Mammary epithelial cell (primary cell): ENCODE measurements at regions of chr21 and their contacts with region 1.

Region 1: GRCh38 chr21:32257962-32258785 is 20.7 kb downstream of the MIS18A start:
- DNase-seq: peak; percentile 68
- H3K4me3 ChIP-seq: no peak overlapping the region
- H3K27ac ChIP-seq: no peak overlapping the region
- H3K4me1 ChIP-seq: peaks cover 3% of the 10 kb centered on the region
- H3K27me3 ChIP-seq: no peaks in the 10 kb centered on the region
- CTCF ChIP-seq: peak; percentile 63 to 78

Region 2: DNA sequence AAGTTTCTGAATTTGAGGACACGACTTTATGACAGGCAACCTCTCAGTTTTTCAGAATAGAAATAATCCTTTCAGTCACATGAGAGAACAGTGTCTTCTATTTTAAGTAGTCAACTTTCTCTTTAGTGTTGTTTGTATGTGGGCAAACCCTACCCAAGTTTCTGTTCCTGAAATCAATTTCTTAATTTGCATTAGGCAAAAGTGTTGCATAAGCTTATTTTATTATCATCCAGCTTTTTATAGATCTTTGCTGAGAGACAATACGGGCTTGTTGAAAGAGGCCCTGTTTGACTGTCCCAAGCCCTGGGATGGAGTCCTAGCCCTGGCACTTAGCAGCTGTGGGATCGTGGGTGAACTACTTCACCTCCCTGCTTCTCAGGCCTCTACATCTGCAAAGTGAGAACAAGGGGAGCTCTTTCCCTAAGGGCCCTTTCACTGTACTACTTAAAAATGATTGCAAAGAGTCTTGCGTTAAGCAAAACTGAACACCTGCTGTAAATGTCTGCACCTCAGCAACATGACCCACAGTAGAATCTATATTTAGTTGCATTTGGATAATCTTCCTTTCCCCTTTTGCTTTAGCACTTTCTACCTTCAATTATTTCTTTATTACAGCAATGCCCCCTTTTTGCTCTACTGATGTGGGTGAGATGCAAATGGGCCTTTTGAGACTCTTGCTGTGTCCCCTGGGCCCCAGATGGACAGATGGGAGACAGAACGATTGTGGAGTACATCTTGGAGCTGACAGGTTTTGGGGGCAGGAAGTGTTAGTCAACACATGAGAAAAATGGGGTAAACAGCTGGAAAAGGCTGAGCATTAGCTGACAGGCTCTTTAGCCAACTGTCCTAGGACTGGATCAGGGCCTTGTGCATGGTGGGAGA is 485.3 kb before region 1 on chr21:
- CTCF ChIA-PET with region 1: no interaction called
- dilution Hi-C with region 1: no loop called
- in situ Hi-C with region 1: loop called in 1 of 2 experiments (anchors 10 kb)
- intact Hi-C with region 1: no loop called
- DNase-seq: no peak
- H3K4me3 ChIP-seq: no peak overlapping the region
- H3K27ac ChIP-seq: no peak overlapping the region
- H3K4me1 ChIP-seq: no peaks in the 10 kb centered on the region
- H3K27me3 ChIP-seq: no peaks in the 10 kb centered on the region
- CTCF ChIP-seq: no peak

Region 3: DNA sequence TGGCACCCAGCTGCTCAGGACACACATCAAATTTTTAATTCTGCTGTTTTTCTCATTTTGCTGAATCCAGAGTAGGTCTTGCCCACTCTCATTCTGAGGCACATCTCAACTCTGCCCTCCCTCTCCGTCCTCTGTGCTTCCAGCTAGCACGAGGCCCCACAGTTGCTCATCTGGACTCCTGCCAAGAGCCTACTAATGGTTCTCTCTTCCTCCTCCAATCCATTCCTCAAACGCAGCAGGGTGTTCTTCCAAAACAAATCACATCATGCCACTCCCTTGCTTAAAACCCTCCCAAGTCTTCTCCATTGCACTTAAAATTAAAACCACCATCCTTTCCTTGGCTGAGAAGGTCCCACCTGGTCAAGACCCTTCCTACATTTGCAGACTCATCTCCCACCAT is 476.4 kb before region 1 on chr21:
- CTCF ChIA-PET with region 1: interaction called, 5 read pairs
- dilution Hi-C with region 1: no loop called
- in situ Hi-C with region 1: loop called in 1 of 2 experiments (anchors 10 kb)
- intact Hi-C with region 1: loop called (anchors 1 kb)
- DNase-seq: no peak
- H3K4me3 ChIP-seq: no peak overlapping the region
- H3K27ac ChIP-seq: no peak overlapping the region
- H3K4me1 ChIP-seq: no peaks in the 10 kb centered on the region
- H3K27me3 ChIP-seq: no peaks in the 10 kb centered on the region
- CTCF ChIP-seq: no peak

Region 4: GRCh38 chr21:31798842-31799704 is 459.1 kb before region 1 on chr21:
- CTCF ChIA-PET with region 1: no interaction called
- dilution Hi-C with region 1: no loop called
- in situ Hi-C with region 1: loop called in 1 of 2 experiments (anchors 10 kb)
- intact Hi-C with region 1: no loop called
- DNase-seq: peak; percentile 48
- H3K4me3 ChIP-seq: no peak overlapping the region
- H3K27ac ChIP-seq: no peak overlapping the region
- H3K4me1 ChIP-seq: peaks cover 4% of the 10 kb centered on the region
- H3K27me3 ChIP-seq: no peaks in the 10 kb centered on the region
- CTCF ChIP-seq: no peak

Region 5: GRCh38 chr21:31866077-31866511 is 392.1 kb before region 1 on chr21:
- CTCF ChIA-PET with region 1: no interaction called
- dilution Hi-C with region 1: no loop called
- in situ Hi-C with region 1: loop called (anchors 10 to 25 kb)
- intact Hi-C with region 1: loop called (anchors 1 kb)
- DNase-seq: peak; percentile 53
- H3K4me3 ChIP-seq: no peak overlapping the region
- H3K27ac ChIP-seq: no peak overlapping the region
- H3K4me1 ChIP-seq: no peaks in the 10 kb centered on the region
- H3K27me3 ChIP-seq: no peaks in the 10 kb centered on the region
- CTCF ChIP-seq: peak; percentile 56 to 75

Region 6: DNA sequence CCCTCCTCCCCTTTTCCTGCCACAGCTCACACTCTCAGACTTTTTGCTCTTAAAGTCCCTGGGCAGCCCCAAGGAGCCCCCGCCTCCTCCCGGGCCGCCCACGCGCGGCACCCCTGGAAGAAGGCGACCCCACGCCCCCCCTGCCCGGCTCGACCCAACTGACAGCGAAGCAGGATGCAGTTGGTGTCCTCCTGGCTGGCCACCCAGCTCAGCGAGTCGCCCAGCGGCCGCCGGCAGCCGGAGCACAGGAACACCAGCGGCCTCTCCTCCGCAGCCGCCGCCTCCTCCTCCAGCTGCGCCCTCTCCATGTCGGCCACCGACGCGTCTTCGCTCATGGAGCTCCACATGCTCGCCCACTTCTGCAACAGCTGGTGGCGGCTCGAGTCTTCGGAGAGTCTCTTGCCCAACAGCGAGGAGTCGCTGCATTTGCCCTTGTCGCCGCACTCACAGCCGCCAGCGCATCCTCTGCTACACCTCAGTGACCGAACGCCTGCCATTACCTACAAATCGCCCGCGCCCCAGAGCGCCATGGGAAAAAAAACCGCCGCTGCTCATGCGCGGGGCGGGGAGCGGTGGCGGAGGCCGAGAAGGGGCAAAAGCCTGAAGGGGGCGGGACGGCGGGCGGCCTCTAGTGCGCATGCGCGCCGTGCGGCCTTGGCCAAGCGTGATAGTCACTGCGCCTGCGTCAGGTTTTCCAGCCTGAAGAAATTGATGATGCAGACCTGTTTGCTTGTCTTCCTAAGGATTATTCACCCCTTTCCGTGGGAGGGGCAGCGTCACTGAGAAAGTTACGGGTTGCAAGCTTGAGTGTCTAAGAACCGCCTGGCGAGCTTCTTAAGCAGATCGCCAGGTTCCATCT is 20.6 kb after region 1 on chr21 and contains the start of gene MIS18A:
- CTCF ChIA-PET with region 1: no interaction called
- dilution Hi-C with region 1: no loop called
- in situ Hi-C with region 1: no loop called
- intact Hi-C with region 1: no loop called
- DNase-seq: peak; percentile 98
- H3K4me3 ChIP-seq: peak within 1 kb of the TSS; percentile 94 to 98 (median 94)
- H3K27ac ChIP-seq: peak within 1 kb of the TSS; percentile 74
- H3K4me1 ChIP-seq: peaks cover 16% of the 10 kb centered on the region
- H3K27me3 ChIP-seq: no peaks in the 10 kb centered on the region
- CTCF ChIP-seq: no peak
- total RNA-seq, gene MIS18A: 4.3 to 14.8 TPM

Region 7: GRCh38 chr21:32604464-32604863 is 346.3 kb after region 1 on chr21:
- CTCF ChIA-PET with region 1: no interaction called
- dilution Hi-C with region 1: no loop called
- in situ Hi-C with region 1: no loop called
- intact Hi-C with region 1: loop called (anchors 5 kb)
- DNase-seq: no peak
- H3K4me3 ChIP-seq: no peak overlapping the region
- H3K27ac ChIP-seq: no peak overlapping the region
- H3K4me1 ChIP-seq: peaks cover 10% of the 10 kb centered on the region
- H3K27me3 ChIP-seq: no peaks in the 10 kb centered on the region
- CTCF ChIP-seq: no peak